Aorta (tissue), 5 donors: ENCODE measurements at regions of chr9 and their contacts with region 1.

Region 1: GRCh38 chr9:87069690-87070089 is 122.4 kb upstream of the GAS1 start:
- DNase-seq: no peak
- ATAC-seq: no peak
- H3K4me3 ChIP-seq: no peak overlapping the region
- H3K27ac ChIP-seq: no peak overlapping the region
- H3K4me1 ChIP-seq: no peaks in the 10 kb centered on the region
- H3K27me3 ChIP-seq: no peaks in the 10 kb centered on the region

Region 2: GRCh38 chr9:87119328-87119881 is 49.7 kb after region 1 on chr9:
- intact Hi-C with region 1: loop called in 1 of 2 experiments (anchors 5 kb)
- DNase-seq: peak in 1 of 2 donors; percentile 58
- ATAC-seq: peak; percentile 60
- H3K4me3 ChIP-seq: no peak overlapping the region
- H3K27ac ChIP-seq: peak overlapping the region in 1 of 2 donors; percentile 96
- H3K4me1 ChIP-seq: peaks cover 5 to 6% of the 10 kb centered on the region in 2 donors
- H3K27me3 ChIP-seq: no peaks in the 10 kb centered on the region